ENCODE measurements at regions of chr7 and their contacts with region 1.

Region 1: GRCh38 chr7:78020136-78020873 is 221.7 kb downstream of the PHTF2 start:
- DNase-seq: peak; percentile 29 to 45
- ATAC-seq: peak; percentile 74 to 85
- H3K4me3 ChIP-seq: peak overlapping the region; percentile 62 to 76 (median 67)
- H3K27ac ChIP-seq: peak overlapping the region; percentile 90 to 94 (median 92)
- H3K4me1 ChIP-seq: peaks cover 12 to 14% of the 10 kb centered on the region in 2 donors
- H3K27me3 ChIP-seq: no peaks in the 10 kb centered on the region
- CTCF ChIP-seq: peak; percentile 55 to 75 (median 58)
- POLR2A ChIP-seq: no peak

Region 2: DNA sequence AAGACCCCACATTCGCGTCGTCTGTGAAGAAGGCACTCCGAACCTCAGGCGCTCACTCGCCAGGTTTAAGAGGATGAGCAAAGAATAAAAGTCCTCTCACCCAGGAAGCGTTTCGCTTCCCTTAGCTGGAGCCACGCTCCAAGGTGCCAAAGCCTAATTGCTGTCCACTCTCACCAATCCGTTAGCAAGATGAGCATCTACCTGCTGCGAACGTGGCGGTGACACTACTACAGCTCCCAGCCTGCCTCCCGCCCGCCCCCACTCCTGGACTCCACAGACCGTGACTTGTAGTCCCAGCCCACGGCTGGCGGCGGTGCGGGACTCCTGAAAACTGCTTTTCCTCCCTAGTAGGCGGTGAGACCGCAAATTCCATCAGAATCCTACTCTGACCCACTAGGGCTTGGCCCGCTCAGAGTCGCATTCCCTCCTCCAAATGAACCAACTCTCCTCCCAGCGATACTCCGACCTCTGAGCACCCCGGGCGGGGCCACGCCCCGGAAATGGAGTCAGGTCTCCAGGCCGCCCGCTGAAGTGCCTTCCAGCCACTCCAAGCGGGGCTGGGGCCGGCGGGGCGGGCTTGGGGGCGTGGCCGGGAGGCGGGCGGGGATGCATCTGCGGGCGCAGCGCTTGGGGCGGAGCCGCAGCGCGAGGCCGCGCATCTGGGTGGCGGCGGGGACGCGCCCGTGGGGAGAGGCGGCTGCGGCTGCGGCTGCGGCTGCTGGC is 483.7 kb before region 1 on chr7:
- in situ Hi-C with region 1: no loop called
- intact Hi-C with region 1: loop called (anchors 5 kb)
- DNase-seq: peak; percentile 96 to 97
- ATAC-seq: peak; percentile 84 to 87
- H3K4me3 ChIP-seq: peak overlapping the region; percentile 84 to 99 (median 88)
- H3K27ac ChIP-seq: peak overlapping the region; percentile 89 to 99 (median 92)
- H3K4me1 ChIP-seq: peaks cover 16 to 23% of the 10 kb centered on the region in 2 donors
- H3K27me3 ChIP-seq: no peaks in the 10 kb centered on the region
- CTCF ChIP-seq: no peak
- POLR2A ChIP-seq: peak; percentile 89 to 96

Region 3: DNA sequence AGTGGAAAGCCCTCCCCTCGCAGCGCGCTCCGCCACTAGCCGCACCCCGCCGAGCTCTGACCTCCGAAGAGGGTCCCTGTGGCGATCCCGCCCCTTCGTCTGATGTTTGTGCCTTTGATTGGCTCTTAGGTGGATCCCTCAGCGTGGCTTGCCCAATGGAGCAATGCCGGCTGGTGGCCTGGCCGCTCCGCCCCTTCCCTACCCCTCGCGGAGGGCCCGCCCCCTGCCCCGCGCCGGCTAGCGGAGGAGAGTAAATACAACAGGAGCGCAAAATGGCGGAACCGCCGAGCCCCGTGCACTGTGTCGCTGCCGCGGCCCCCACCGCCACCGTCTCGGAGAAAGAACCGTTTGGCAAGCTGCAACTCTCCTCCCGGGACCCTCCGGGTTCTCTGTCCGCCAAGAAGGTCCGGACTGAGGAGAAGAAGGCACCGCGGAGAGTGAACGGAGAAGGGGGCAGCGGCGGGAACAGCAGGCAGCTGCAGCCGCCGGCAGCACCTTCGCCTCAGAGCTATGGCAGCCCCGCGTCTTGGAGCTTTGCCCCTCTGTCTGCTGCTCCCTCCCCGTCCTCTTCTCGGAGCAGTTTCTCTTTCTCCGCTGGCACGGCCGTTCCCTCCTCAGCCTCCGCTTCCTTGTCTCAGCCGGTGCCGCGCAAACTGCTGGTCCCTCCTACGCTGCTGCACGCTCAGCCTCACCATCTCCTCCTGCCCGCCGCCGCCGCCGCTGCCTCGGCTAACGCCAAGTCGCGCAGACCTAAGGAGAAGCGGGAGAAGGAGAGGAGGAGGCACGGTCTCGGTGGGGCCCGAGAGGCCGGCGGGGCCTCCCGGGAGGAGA is 323.9 kb before region 1 on chr7 and contains the start of gene RSBN1L:
- in situ Hi-C with region 1: no loop called
- intact Hi-C with region 1: loop called (anchors 2 kb)
- DNase-seq: peak; percentile 99
- ATAC-seq: peak; percentile 92 to 96
- H3K4me3 ChIP-seq: peak within 1 kb of the TSS; percentile 90 to 100 (median 96)
- H3K27ac ChIP-seq: peak within 1 kb of the TSS; percentile 97 to 99 (median 98)
- H3K4me1 ChIP-seq: peaks cover 39 to 40% of the 10 kb centered on the region in 2 donors
- H3K27me3 ChIP-seq: no peaks in the 10 kb centered on the region
- CTCF ChIP-seq: peak; percentile 24 to 54 (median 43)
- POLR2A ChIP-seq: peak; percentile 90 to 98
- total RNA-seq, gene RSBN1L: 5.1 to 11.7 (median 8.7) TPM

Region 4: GRCh38 chr7:78039790-78040776 is 19.8 kb after region 1 on chr7:
- in situ Hi-C with region 1: no loop called
- intact Hi-C with region 1: loop called (anchors 1 kb)
- DNase-seq: no peak
- ATAC-seq: no peak
- H3K4me3 ChIP-seq: no peak overlapping the region
- H3K27ac ChIP-seq: no peak overlapping the region
- H3K4me1 ChIP-seq: no peaks in the 10 kb centered on the region
- H3K27me3 ChIP-seq: no peaks in the 10 kb centered on the region
- CTCF ChIP-seq: peak; percentile 35 to 72 (median 58)
- POLR2A ChIP-seq: no peak

Region 5: GRCh38 chr7:78769481-78770101 is 749.3 kb after region 1 on chr7:
- in situ Hi-C with region 1: no loop called
- intact Hi-C with region 1: loop called (anchors 10 kb)
- DNase-seq: no peak
- ATAC-seq: no peak
- H3K4me3 ChIP-seq: peak overlapping the region; percentile 36 to 49 (median 46)
- H3K27ac ChIP-seq: peak overlapping the region in 3 of 4 donors; percentile 12 to 77 (median 69)
- H3K4me1 ChIP-seq: peaks cover 25 to 48% of the 10 kb centered on the region in 2 donors
- H3K27me3 ChIP-seq: no peaks in the 10 kb centered on the region
- CTCF ChIP-seq: no peak
- POLR2A ChIP-seq: no peak

Measured in gastrocnemius medialis (tissue), 4 donors.